ENCODE measurements at regions of chr10 and their contacts with region 1.

Region 1: GRCh38 chr10:9043466-9043865 is 989.0 kb downstream of the GATA3 start:
- DNase-seq: no peak
- H3K4me3 ChIP-seq: no peak overlapping the region
- H3K27ac ChIP-seq: no peak overlapping the region
- H3K4me1 ChIP-seq: peaks cover under 1% of the 10 kb centered on the region
- H3K27me3 ChIP-seq: no peaks in the 10 kb centered on the region
- CTCF ChIP-seq: no peak

Region 2: DNA sequence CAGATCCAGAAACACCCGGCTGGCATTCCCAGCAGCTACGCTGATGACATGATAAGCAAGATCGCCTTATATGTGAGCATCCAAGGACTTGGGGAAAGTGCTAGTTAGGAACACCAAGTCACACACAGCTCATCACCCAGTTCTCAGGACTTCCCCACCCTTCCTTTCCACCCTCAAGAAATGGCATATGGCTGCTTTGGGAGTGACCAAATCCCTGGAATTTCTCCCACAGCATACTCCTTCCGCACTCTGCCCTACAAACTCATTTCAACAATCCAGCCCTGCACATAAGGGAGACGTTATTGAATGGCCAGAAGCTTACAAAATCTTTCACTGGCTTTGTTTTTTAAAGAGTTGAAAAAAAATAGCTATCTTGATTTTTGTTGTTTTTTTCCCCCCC is 1380.9 kb before region 1 on chr10:
- CTCF ChIA-PET with region 1: no interaction called
- dilution Hi-C with region 1: no loop called
- in situ Hi-C with region 1: no loop called
- intact Hi-C with region 1: loop called (anchors 5 kb)
- DNase-seq: no peak
- H3K4me3 ChIP-seq: no peak overlapping the region
- H3K27ac ChIP-seq: no peak overlapping the region
- H3K4me1 ChIP-seq: peaks cover 3% of the 10 kb centered on the region
- H3K27me3 ChIP-seq: peaks cover 14% of the 10 kb centered on the region
- CTCF ChIP-seq: no peak

Measured in mammary epithelial cell (primary cell).